IMR-90 (cell line): ENCODE measurements at regions of chr2 and their contacts with region 1.

Region 1: GRCh38 chr2:60550178-60550983 is 3.1 kb downstream of the BCL11A start:
- DNase-seq: peak; percentile 82
- ATAC-seq: peak; percentile 74
- H3K4me3 ChIP-seq: peak overlapping the region; percentile 57
- H3K27ac ChIP-seq: no peak overlapping the region
- H3K4me1 ChIP-seq: no peaks in the 10 kb centered on the region
- H3K27me3 ChIP-seq: peaks cover 39% of the 10 kb centered on the region
- CTCF ChIP-seq: peak; percentile 81
- POLR2A ChIP-seq: no peak
- RAD21 ChIP-seq: peak; percentile 87

Region 2: GRCh38 chr2:58571181-58571852 is 1979.1 kb before region 1 on chr2:
- CTCF ChIA-PET with region 1: interaction called, 4 read pairs
- POLR2A ChIA-PET with region 1: no interaction called
- dilution Hi-C with region 1: no loop called
- in situ Hi-C with region 1: no loop called
- intact Hi-C with region 1: loop called (anchors 10 kb)
- DNase-seq: peak; percentile 69
- ATAC-seq: peak; percentile 96
- H3K4me3 ChIP-seq: no peak overlapping the region
- H3K27ac ChIP-seq: no peak overlapping the region
- H3K4me1 ChIP-seq: no peaks in the 10 kb centered on the region
- H3K27me3 ChIP-seq: no peaks in the 10 kb centered on the region
- CTCF ChIP-seq: peak; percentile 64
- POLR2A ChIP-seq: no peak
- RAD21 ChIP-seq: peak; percentile 68

Region 3: DNA sequence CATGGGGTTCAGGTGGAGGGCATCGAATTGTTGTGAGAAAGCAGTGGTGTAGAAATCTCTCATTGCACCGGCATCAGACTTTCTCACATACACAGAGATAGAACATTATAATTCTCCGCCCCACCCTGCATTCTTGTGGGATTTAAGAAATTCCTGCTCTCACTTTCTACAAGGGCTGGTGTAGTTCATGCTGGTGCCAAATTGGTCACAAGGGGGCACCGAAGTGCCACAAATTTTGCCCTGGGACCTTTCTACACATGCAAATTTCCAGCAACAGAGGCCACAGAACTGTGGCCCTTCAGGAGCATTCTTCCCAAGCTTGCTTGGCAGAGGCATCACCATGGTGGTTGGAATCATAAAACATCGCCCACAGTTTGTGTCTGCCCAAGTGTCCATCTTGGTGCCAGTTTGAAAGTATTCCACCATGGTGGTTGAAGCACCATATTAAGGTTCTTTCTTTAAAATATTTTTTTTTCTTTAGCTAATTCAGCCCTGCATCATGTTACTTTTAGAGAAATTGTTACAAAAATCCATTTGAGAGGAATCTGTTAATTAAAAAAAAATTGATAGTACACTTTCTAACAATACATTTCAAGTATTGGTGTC is 1788.1 kb before region 1 on chr2:
- CTCF ChIA-PET with region 1: no interaction called
- POLR2A ChIA-PET with region 1: no interaction called
- dilution Hi-C with region 1: no loop called
- in situ Hi-C with region 1: no loop called
- intact Hi-C with region 1: loop called (anchors 1 kb)
- DNase-seq: peak; percentile 28
- ATAC-seq: peak; percentile 78
- H3K4me3 ChIP-seq: no peak overlapping the region
- H3K27ac ChIP-seq: no peak overlapping the region
- H3K4me1 ChIP-seq: no peaks in the 10 kb centered on the region
- H3K27me3 ChIP-seq: no peaks in the 10 kb centered on the region
- CTCF ChIP-seq: peak; percentile 64
- POLR2A ChIP-seq: no peak
- RAD21 ChIP-seq: peak; percentile 73

Region 4: GRCh38 chr2:59025157-59025757 is 1525.1 kb before region 1 on chr2:
- CTCF ChIA-PET with region 1: no interaction called
- POLR2A ChIA-PET with region 1: interaction called, 6 read pairs
- dilution Hi-C with region 1: no loop called
- in situ Hi-C with region 1: no loop called
- intact Hi-C with region 1: loop called (anchors 1 kb)
- DNase-seq: peak; percentile 26
- ATAC-seq: peak; percentile 70
- H3K4me3 ChIP-seq: no peak overlapping the region
- H3K27ac ChIP-seq: no peak overlapping the region
- H3K4me1 ChIP-seq: no peaks in the 10 kb centered on the region
- H3K27me3 ChIP-seq: no peaks in the 10 kb centered on the region
- CTCF ChIP-seq: peak; percentile 59
- POLR2A ChIP-seq: no peak
- RAD21 ChIP-seq: peak; percentile 58

Region 5: DNA sequence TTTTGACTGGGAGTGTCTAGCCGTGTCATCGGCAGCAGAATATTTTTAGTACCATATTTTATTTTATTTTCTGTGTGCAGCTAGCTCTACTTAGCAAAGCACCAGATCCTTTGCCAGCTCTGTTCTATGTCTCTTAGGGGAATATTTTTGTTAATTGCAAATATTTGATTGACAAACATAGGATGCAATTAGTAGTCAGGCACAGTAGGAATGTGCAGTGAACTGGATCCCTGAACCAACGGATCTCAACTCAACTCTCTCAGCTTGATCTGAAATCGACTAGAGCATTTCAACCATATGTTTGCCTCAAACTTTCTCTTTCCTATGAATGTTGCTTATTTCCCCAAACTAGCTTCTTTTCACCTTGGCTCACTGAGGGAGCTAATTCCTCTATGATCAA is 1311.2 kb before region 1 on chr2:
- CTCF ChIA-PET with region 1: no interaction called
- POLR2A ChIA-PET with region 1: interaction called, 20 read pairs
- dilution Hi-C with region 1: no loop called
- in situ Hi-C with region 1: no loop called
- intact Hi-C with region 1: no loop called
- DNase-seq: no peak
- ATAC-seq: no peak
- H3K4me3 ChIP-seq: no peak overlapping the region
- H3K27ac ChIP-seq: no peak overlapping the region
- H3K4me1 ChIP-seq: no peaks in the 10 kb centered on the region
- H3K27me3 ChIP-seq: no peaks in the 10 kb centered on the region
- CTCF ChIP-seq: no peak
- POLR2A ChIP-seq: no peak
- RAD21 ChIP-seq: no peak

Region 6: DNA sequence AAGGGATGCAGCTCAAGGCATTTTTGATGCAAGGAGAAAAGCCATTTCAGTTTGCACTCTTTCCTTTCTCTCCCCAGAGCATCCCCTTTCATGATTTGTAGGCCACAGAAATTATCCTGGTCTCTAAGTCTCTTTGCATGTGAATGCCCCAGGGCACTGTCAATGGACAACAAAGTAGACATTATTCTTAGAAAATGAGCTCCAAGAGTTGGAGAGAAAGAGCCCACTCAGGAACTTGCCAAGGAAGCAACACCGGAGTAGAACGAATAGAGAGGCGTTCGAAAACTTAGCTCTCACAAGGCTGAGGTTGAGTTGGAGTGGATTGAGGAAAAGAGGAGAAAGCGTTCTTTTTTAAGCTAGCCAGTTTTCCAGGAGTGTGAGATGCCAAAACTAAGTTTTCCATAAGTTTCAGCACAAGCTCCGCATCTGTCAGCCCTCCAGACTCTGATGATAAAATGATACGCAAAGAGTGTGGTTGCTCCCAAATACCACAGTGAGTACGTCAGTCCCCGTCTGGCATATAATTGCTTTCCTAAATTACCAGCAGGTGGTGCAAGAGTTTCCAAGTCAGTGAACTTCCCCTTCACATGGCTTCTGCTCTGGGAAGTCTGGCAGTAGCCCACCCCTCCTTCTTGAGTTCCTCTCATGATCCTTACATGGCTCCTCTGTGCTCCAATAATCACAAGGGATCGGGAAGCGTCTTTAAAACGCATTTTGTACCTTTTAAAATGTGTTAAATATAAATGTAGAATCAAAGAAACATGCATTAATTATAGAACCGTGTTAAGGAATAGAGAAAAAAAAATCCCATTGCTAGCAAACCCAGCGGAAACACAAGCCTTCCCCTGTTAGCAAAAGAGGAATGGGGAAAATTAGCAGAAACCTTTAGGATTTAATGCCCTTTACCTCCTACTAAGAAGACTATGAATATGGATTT is 1248.6 kb before region 1 on chr2:
- CTCF ChIA-PET with region 1: no interaction called
- POLR2A ChIA-PET with region 1: no interaction called
- dilution Hi-C with region 1: no loop called
- in situ Hi-C with region 1: no loop called
- intact Hi-C with region 1: loop called (anchors 1 kb)
- DNase-seq: peak; percentile 70
- ATAC-seq: peak; percentile 48
- H3K4me3 ChIP-seq: no peak overlapping the region
- H3K27ac ChIP-seq: no peak overlapping the region
- H3K4me1 ChIP-seq: no peaks in the 10 kb centered on the region
- H3K27me3 ChIP-seq: no peaks in the 10 kb centered on the region
- CTCF ChIP-seq: peak; percentile 55
- POLR2A ChIP-seq: no peak
- RAD21 ChIP-seq: peak; percentile 53

Region 7: GRCh38 chr2:60337140-60337494 is 213.3 kb before region 1 on chr2:
- CTCF ChIA-PET with region 1: interaction called, 6 read pairs
- POLR2A ChIA-PET with region 1: no interaction called
- dilution Hi-C with region 1: no loop called
- in situ Hi-C with region 1: no loop called
- intact Hi-C with region 1: loop called (anchors 1 kb)
- DNase-seq: no peak
- ATAC-seq: no peak
- H3K4me3 ChIP-seq: no peak overlapping the region
- H3K27ac ChIP-seq: no peak overlapping the region
- H3K4me1 ChIP-seq: no peaks in the 10 kb centered on the region
- H3K27me3 ChIP-seq: no peaks in the 10 kb centered on the region
- CTCF ChIP-seq: 0 out of 2 replicates have a peak, but pooled peaks have one; percentile 5
- POLR2A ChIP-seq: no peak
- RAD21 ChIP-seq: no peak